CD8-positive, alpha-beta T cell (primary cell): ENCODE measurements at regions of chr5 and their contacts with region 1.

Region 1: GRCh38 chr5:71503536-71503935 is 48.1 kb downstream of the BDP1 start:
- DNase-seq: no peak
- ATAC-seq: no peak
- H3K4me3 ChIP-seq: no peak overlapping the region
- H3K4me3 Mint-ChIP-seq: no peak overlapping the region
- H3K27ac ChIP-seq: no peak overlapping the region
- H3K27ac Mint-ChIP-seq: no peak overlapping the region
- H3K4me1 ChIP-seq: no peaks in the 10 kb centered on the region
- H3K4me1 Mint-ChIP-seq: no peaks in the 10 kb centered on the region
- H3K27me3 ChIP-seq: no peaks in the 10 kb centered on the region
- H3K27me3 Mint-ChIP-seq: no peaks in the 10 kb centered on the region
- CTCF ChIP-seq: no peak

Region 2: GRCh38 chr5:71482132-71482531 is 21.4 kb before region 1 on chr5:
- CTCF ChIA-PET with region 1: no interaction called
- POLR2A ChIA-PET with region 1: no interaction called
- intact Hi-C with region 1: loop called in 1 of 2 experiments (anchors 2 kb)
- DNase-seq: no peak
- ATAC-seq: no peak
- H3K4me3 ChIP-seq: no peak overlapping the region
- H3K4me3 Mint-ChIP-seq: no peak overlapping the region
- H3K27ac ChIP-seq: no peak overlapping the region
- H3K27ac Mint-ChIP-seq: no peak overlapping the region
- H3K4me1 ChIP-seq: no peaks in the 10 kb centered on the region
- H3K4me1 Mint-ChIP-seq: peaks cover 25% of the 10 kb centered on the region
- H3K27me3 ChIP-seq: no peaks in the 10 kb centered on the region
- H3K27me3 Mint-ChIP-seq: no peaks in the 10 kb centered on the region
- CTCF ChIP-seq: no peak